MCF 10A (cell line): ENCODE measurements at regions of chr18 and their contacts with region 1.

Region 1: GRCh38 chr18:48345596-48345995 is 63.6 kb downstream of the ZBTB7C start:
- DNase-seq: peak; percentile 55
- H3K4me3 Mint-ChIP-seq: no peak overlapping the region
- H3K27ac Mint-ChIP-seq: no peak overlapping the region
- H3K4me1 Mint-ChIP-seq: peaks cover 10% of the 10 kb centered on the region
- H3K27me3 Mint-ChIP-seq: no peaks in the 10 kb centered on the region
- CTCF ChIP-seq: peak; percentile 55

Region 2: DNA sequence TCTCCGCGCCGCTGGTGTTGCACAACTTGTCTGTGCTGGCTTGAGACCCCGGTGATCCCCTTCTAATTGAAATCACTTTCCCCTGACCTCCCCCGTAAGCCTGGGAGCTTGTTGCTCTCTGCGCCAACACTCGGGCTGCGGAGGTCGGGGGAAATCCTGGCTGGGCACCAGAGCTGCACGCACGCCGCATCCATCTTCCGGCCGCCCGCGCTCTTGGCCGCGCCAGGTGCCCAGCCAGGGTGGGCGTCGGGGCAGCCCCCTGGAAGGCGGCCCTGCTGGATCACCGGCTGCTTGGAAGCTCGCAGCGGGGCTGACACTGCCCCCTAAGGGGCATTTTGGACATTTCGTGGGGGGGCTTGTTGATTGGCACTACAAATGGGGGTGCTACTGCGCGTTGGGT is 813.9 kb before region 1 on chr18:
- CTCF ChIA-PET with region 1: no interaction called
- POLR2A ChIA-PET with region 1: no interaction called
- intact Hi-C with region 1: no loop called
- DNase-seq: no peak
- H3K4me3 Mint-ChIP-seq: no peak overlapping the region
- H3K27ac Mint-ChIP-seq: no peak overlapping the region
- H3K4me1 Mint-ChIP-seq: no peaks in the 10 kb centered on the region
- H3K27me3 Mint-ChIP-seq: peaks cover 15% of the 10 kb centered on the region
- CTCF ChIP-seq: no peak

Region 3: DNA sequence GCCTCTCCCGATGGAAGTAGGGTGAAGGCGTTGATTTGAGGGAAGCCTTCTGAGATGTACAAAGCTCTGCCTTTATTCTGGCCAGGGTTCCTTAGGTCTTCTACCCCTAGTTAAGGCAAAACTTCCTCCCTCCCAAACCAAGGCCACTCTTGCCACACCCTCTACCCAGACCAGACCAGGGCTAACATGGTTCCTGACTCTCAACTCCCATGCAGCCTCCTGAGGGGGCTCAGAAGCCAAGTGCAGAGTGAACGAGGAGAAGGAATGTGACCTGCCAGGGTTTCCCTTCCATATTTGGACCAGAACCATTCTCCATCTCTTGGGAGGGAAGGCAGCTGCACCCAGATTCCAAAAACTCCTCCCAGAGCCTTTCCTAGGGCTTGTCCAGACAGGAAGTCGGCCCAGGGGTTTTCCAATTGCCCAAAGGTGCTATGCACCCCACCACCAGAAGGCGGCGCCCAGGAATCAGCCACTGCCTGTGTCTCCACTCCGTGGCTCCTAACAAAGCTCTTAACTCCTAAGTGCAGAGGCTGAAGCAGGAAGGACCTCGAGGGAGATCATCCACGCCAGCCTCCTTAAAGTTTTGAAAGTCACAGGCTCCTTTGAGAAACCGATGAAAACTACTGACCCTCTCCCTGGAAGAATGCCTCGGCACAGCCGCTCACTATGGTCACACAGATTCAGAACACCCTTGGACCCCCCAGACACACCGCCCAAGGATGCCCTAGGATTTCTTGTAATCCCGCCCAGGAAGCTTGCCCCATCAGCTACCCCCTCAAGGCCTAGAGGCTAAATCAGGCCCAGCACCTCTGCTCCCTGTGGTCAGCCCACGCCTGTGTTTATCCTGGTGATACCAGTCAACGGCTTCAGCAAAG is 573.0 kb before region 1 on chr18:
- CTCF ChIA-PET with region 1: no interaction called
- POLR2A ChIA-PET with region 1: no interaction called
- intact Hi-C with region 1: loop called (anchors 5 kb)
- DNase-seq: peak; percentile 83
- H3K4me3 Mint-ChIP-seq: no peak overlapping the region
- H3K27ac Mint-ChIP-seq: no peak overlapping the region
- H3K4me1 Mint-ChIP-seq: no peaks in the 10 kb centered on the region
- H3K27me3 Mint-ChIP-seq: peaks cover 40% of the 10 kb centered on the region
- CTCF ChIP-seq: peak; percentile 93

Region 4: GRCh38 chr18:48161191-48161910 is 184.2 kb before region 1 on chr18:
- CTCF ChIA-PET with region 1: no interaction called
- POLR2A ChIA-PET with region 1: no interaction called
- intact Hi-C with region 1: no loop called
- DNase-seq: peak; percentile 93
- H3K4me3 Mint-ChIP-seq: peak overlapping the region; percentile 76
- H3K27ac Mint-ChIP-seq: peak overlapping the region; percentile 93
- H3K4me1 Mint-ChIP-seq: peaks cover 6% of the 10 kb centered on the region
- H3K27me3 Mint-ChIP-seq: no peaks in the 10 kb centered on the region
- CTCF ChIP-seq: no peak